Ovary (tissue), 10 donors: ENCODE measurements at regions of chr18 and their contacts with region 1.

Region 1: DNA sequence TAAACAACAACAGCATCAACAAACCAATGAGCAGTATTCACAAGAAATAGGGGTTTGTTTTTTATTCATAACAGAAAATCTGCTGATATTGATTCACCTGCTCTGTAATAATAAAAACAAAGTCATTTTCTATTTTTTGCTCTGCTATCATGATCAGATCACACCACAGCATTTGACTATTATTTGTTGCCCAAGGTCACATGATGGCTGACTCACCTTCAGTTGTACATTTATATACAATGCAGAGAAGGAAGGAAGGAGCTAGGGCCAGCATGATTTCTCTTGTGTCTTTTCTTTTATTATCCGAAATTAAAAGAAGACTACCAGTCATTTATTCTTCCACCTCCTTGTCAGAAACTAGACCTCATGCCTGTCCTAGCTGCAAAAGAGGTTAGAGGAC is 1427.7 kb upstream of the CELF4 start:
- DNase-seq: no peak
- H3K4me3 ChIP-seq: no peak overlapping the region
- H3K27ac ChIP-seq: no peak overlapping the region
- H3K4me1 ChIP-seq: no peaks in the 10 kb centered on the region
- H3K27me3 ChIP-seq: no peaks in the 10 kb centered on the region
- CTCF ChIP-seq: no peak
- EP300 ChIP-seq: no peak
- POLR2A ChIP-seq: no peak

Region 2: DNA sequence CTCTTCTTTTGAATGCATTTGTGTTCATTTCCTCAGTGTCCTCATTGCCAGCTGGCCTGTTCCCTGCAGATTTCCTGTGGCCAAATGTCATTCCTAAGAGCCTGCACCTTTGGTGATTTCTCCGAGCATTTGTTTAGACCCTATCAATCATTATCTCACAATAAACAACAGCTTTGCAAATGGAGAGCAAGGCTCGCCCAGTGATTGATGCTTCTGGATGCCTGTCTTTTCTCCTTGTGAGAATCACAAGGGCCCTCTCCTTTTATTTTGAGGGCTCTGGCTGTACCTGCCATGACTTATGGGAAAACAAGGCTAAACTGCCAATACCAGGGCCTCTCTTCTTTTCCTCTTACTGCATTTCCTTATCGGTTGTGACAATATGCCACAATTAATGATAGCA is 26.6 kb after region 1 on chr18:
- intact Hi-C with region 1: loop called in 1 of 4 experiments (anchors 2 kb)
- DNase-seq: no peak
- H3K4me3 ChIP-seq: no peak overlapping the region
- H3K27ac ChIP-seq: no peak overlapping the region
- H3K4me1 ChIP-seq: no peaks in the 10 kb centered on the region
- H3K27me3 ChIP-seq: no peaks in the 10 kb centered on the region
- CTCF ChIP-seq: no peak
- EP300 ChIP-seq: no peak
- POLR2A ChIP-seq: no peak